Caco-2 (cell line): ENCODE measurements at regions of chr2 and their contacts with region 1.

Region 1: GRCh38 chr2:149125002-149125725 is 86.7 kb downstream of the LYPD6B start:
- DNase-seq: peak; percentile 88 to 90
- H3K4me3 ChIP-seq: 0 out of 2 replicates have a peak overlapping the region, but pooled peaks have one; percentile 5
- H3K4me3 Mint-ChIP-seq: peak overlapping the region; percentile 54
- H3K27ac Mint-ChIP-seq: peak overlapping the region; percentile 78
- H3K4me1 ChIP-seq: peaks cover 39% of the 10 kb centered on the region
- H3K4me1 Mint-ChIP-seq: peaks cover 39% of the 10 kb centered on the region
- H3K27me3 ChIP-seq: no peaks in the 10 kb centered on the region
- H3K27me3 Mint-ChIP-seq: no peaks in the 10 kb centered on the region
- CTCF ChIP-seq: no peak

Region 2: DNA sequence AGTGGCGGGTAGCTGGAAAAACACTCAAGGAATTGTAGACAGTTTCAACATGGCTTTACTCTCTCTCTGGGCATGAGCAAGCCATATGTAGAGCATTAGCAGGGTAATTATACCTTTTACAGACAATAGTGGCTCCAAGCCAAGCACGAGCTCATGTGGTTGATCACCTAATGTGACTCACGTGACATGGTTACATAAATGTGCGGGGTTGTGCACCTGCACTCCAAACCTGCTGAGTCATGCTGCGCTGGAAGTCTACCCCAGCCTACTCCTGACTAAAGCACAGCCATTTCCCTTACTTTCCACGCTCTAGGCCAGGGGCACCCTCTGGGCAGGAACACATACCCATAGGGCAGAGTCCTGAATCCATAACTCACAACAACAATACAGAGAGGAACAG is 871.5 kb before region 1 on chr2:
- CTCF ChIA-PET with region 1: no interaction called
- POLR2A ChIA-PET with region 1: no interaction called
- intact Hi-C with region 1: no loop called
- DNase-seq: peak in 1 of 2 experiments; percentile 14
- H3K4me3 ChIP-seq: no peak overlapping the region
- H3K4me3 Mint-ChIP-seq: no peak overlapping the region
- H3K27ac Mint-ChIP-seq: no peak overlapping the region
- H3K4me1 ChIP-seq: no peaks in the 10 kb centered on the region
- H3K4me1 Mint-ChIP-seq: no peaks in the 10 kb centered on the region
- H3K27me3 ChIP-seq: no peaks in the 10 kb centered on the region
- H3K27me3 Mint-ChIP-seq: no peaks in the 10 kb centered on the region
- CTCF ChIP-seq: no peak

Region 3: GRCh38 chr2:149070681-149071387 is 54.3 kb before region 1 on chr2:
- CTCF ChIA-PET with region 1: no interaction called
- POLR2A ChIA-PET with region 1: no interaction called
- intact Hi-C with region 1: loop called (anchors 1 kb)
- DNase-seq: peak; percentile 75 to 89
- H3K4me3 ChIP-seq: 0 out of 2 replicates have a peak overlapping the region, but pooled peaks have one; percentile 3
- H3K4me3 Mint-ChIP-seq: peak overlapping the region; percentile 63
- H3K27ac Mint-ChIP-seq: peak overlapping the region; percentile 80
- H3K4me1 ChIP-seq: peaks cover 29% of the 10 kb centered on the region
- H3K4me1 Mint-ChIP-seq: peaks cover 53% of the 10 kb centered on the region
- H3K27me3 ChIP-seq: no peaks in the 10 kb centered on the region; the same call in 1 of the 2 replicates
- H3K27me3 Mint-ChIP-seq: no peaks in the 10 kb centered on the region
- CTCF ChIP-seq: no peak

Region 4: DNA sequence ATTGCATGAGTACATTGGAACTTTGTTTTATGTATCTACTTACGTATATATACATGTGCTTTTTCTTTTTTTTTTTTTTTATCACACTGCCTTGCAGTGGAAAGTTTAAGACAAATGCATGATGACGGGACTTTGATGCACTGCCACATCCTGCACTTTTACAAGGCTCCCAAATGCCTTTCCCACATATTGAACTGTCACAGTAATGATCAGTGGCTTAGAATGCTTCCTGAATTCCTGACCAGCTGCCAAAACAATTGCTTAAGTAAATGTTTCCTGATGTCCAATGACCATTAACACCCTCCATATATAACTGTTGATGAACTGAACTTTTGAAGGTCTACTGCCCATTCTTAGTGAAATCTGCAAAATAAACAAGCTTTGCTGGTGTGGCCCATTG is 26.5 kb before region 1 on chr2:
- CTCF ChIA-PET with region 1: no interaction called
- POLR2A ChIA-PET with region 1: no interaction called
- intact Hi-C with region 1: no loop called
- DNase-seq: no peak
- H3K4me3 ChIP-seq: no peak overlapping the region
- H3K4me3 Mint-ChIP-seq: no peak overlapping the region
- H3K27ac Mint-ChIP-seq: no peak overlapping the region
- H3K4me1 ChIP-seq: peaks cover 8% of the 10 kb centered on the region
- H3K4me1 Mint-ChIP-seq: peaks cover 16% of the 10 kb centered on the region
- H3K27me3 ChIP-seq: no peaks in the 10 kb centered on the region
- H3K27me3 Mint-ChIP-seq: no peaks in the 10 kb centered on the region
- CTCF ChIP-seq: no peak

Region 5: DNA sequence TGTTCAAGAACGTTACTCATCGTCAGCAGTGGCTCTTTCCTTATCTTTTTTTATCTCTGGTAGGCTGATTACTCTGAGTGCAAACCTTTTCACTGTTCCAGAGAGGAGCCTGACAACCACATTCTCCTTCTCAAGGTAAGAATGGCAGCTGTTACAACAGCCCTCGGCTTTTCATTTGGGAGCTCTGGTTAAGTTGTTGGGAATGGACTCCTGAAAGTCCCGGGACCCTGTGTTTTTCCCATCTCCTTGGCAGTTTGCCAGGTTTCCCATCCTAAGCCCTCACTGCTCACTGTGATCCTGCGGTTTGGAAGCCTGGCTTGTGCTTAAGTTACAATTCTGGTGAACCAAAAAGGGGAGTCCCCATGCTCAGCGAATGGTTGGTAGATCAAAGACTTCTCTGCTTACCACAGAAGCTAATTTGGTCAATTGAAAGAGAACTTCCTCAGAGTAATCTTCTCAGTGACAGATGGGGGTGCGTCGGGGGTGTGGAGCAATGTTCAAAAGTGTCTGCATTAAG is 35.6 kb after region 1 on chr2:
- CTCF ChIA-PET with region 1: no interaction called
- POLR2A ChIA-PET with region 1: no interaction called
- intact Hi-C with region 1: loop called (anchors 2 kb)
- DNase-seq: peak; percentile 47 to 56
- H3K4me3 ChIP-seq: no peak overlapping the region
- H3K4me3 Mint-ChIP-seq: peak overlapping the region; percentile 57
- H3K27ac Mint-ChIP-seq: peak overlapping the region; percentile 68
- H3K4me1 ChIP-seq: peaks cover 34% of the 10 kb centered on the region
- H3K4me1 Mint-ChIP-seq: peaks cover 25% of the 10 kb centered on the region
- H3K27me3 ChIP-seq: no peaks in the 10 kb centered on the region
- H3K27me3 Mint-ChIP-seq: no peaks in the 10 kb centered on the region
- CTCF ChIP-seq: no peak